IMR-90 (cell line): ENCODE measurements at regions of chr11 and their contacts with region 1.

Region 1: DNA sequence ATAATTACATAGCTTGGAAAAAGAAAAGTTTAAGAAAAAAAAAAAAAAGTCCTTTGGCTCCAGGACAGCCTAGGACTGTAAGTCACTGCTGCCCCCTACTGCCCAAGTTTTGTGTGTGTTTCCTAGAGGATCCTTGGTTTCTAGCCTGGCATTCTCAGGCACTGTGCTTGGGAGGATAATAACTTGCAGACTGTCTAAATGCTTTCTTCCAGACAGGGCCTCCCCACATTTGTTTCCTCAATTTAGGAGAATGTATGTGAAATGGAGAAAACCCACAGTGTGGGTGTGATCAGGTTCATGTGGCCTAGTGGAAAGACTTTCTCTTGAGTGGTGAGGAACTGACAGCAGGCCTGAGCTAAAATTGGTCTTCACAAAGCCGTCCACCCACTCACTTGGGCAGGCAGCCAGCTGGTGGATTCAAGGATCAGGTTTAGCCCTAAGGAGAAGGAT is 191.0 kb downstream of the NAV2 start:
- DNase-seq: peak; percentile 83
- ATAC-seq: peak; percentile 85
- H3K4me3 ChIP-seq: no peak overlapping the region
- H3K27ac ChIP-seq: no peak overlapping the region
- H3K4me1 ChIP-seq: no peaks in the 10 kb centered on the region
- H3K27me3 ChIP-seq: no peaks in the 10 kb centered on the region
- CTCF ChIP-seq: peak; percentile 84
- POLR2A ChIP-seq: no peak
- RAD21 ChIP-seq: peak; percentile 89

Region 2: GRCh38 chr11:19259487-19260345 is 643.9 kb before region 1 on chr11:
- CTCF ChIA-PET with region 1: no interaction called
- POLR2A ChIA-PET with region 1: no interaction called
- dilution Hi-C with region 1: no loop called
- in situ Hi-C with region 1: no loop called
- intact Hi-C with region 1: loop called (anchors 5 kb)
- DNase-seq: peak; percentile 54
- ATAC-seq: peak; percentile 99
- H3K4me3 ChIP-seq: no peak overlapping the region
- H3K27ac ChIP-seq: no peak overlapping the region
- H3K4me1 ChIP-seq: no peaks in the 10 kb centered on the region
- H3K27me3 ChIP-seq: peaks cover 22% of the 10 kb centered on the region
- CTCF ChIP-seq: peak; percentile 90
- POLR2A ChIP-seq: no peak
- RAD21 ChIP-seq: peak; percentile 75

Region 3: DNA sequence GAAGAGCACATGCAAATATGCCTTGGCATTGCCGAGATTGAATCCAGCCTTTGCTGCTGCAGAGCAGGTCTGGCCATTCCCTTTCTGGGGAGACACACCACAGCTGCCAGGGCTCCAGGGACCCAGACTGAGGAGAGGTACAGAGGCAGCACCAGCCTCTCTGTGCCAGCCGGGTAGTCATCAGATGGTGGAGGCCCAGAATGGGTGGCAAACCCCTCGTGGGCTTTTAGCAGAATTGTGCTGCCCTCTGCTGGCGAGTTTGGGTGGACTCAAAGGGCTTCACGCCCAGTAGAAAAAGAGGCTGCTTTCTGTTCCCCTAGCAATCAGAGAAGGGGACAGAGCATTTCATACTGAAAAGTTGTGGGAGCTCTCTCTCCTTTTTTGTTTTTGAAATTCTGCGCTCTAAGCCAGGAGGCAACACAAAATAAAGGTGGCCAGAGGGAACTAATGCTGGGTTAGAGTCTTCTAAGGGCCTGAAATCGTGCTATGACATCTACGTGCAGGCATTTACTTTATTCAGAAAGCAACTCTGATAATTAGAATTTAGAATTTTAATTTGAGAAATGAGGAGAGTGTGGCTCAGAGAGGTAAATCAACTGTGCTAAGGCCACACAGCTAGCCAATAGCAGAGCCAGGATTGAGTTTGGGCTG is 349.8 kb before region 1 on chr11:
- CTCF ChIA-PET with region 1: no interaction called
- POLR2A ChIA-PET with region 1: no interaction called
- dilution Hi-C with region 1: no loop called
- in situ Hi-C with region 1: no loop called
- intact Hi-C with region 1: loop called (anchors 1 kb)
- DNase-seq: peak; percentile 62
- ATAC-seq: peak; percentile 79
- H3K4me3 ChIP-seq: no peak overlapping the region
- H3K27ac ChIP-seq: no peak overlapping the region
- H3K4me1 ChIP-seq: no peaks in the 10 kb centered on the region
- H3K27me3 ChIP-seq: peaks cover 32% of the 10 kb centered on the region
- CTCF ChIP-seq: peak; percentile 94
- POLR2A ChIP-seq: peak; percentile 40; the same call in 1 of the 2 replicates
- RAD21 ChIP-seq: peak; percentile 97

Region 4: GRCh38 chr11:19566583-19567379 is 336.9 kb before region 1 on chr11:
- CTCF ChIA-PET with region 1: interaction called, 13 read pairs
- POLR2A ChIA-PET with region 1: no interaction called
- dilution Hi-C with region 1: no loop called
- in situ Hi-C with region 1: loop called (anchors 5 kb)
- intact Hi-C with region 1: loop called (anchors 1 kb)
- DNase-seq: no peak
- ATAC-seq: no peak
- H3K4me3 ChIP-seq: no peak overlapping the region
- H3K27ac ChIP-seq: no peak overlapping the region
- H3K4me1 ChIP-seq: no peaks in the 10 kb centered on the region; the same call in 1 of the 2 replicates
- H3K27me3 ChIP-seq: peaks cover 1% of the 10 kb centered on the region
- CTCF ChIP-seq: no peak
- POLR2A ChIP-seq: no peak
- RAD21 ChIP-seq: no peak

Region 5: DNA sequence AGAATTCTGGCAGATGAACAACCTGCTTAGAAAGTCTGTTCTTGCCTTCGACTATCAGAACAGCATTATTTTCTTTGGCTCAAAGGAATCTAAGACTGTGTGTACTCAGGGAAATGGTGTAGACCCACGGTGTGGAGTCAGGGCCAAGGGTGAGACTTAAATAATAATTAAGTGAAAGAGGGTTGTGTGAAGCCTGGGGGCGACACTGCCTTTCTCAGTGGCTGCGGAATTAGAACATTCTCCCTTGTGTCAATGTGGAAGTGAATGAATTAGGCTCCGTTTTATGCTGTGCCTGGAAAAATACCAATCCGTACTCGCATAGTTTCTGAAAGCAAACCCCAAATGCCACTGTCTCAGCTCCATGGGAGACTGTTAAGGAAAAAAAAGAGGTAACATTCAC is 140.3 kb before region 1 on chr11:
- CTCF ChIA-PET with region 1: no interaction called
- POLR2A ChIA-PET with region 1: no interaction called
- dilution Hi-C with region 1: no loop called
- in situ Hi-C with region 1: no loop called
- intact Hi-C with region 1: no loop called
- DNase-seq: no peak
- ATAC-seq: no peak
- H3K4me3 ChIP-seq: no peak overlapping the region
- H3K27ac ChIP-seq: no peak overlapping the region
- H3K4me1 ChIP-seq: no peaks in the 10 kb centered on the region
- H3K27me3 ChIP-seq: peaks cover 3% of the 10 kb centered on the region; the same call in 1 of the 2 replicates
- CTCF ChIP-seq: no peak
- POLR2A ChIP-seq: no peak
- RAD21 ChIP-seq: no peak

Region 6: GRCh38 chr11:19951558-19952115 is 48.0 kb after region 1 on chr11:
- CTCF ChIA-PET with region 1: interaction called, 3 read pairs
- POLR2A ChIA-PET with region 1: no interaction called
- dilution Hi-C with region 1: no loop called
- in situ Hi-C with region 1: no loop called
- intact Hi-C with region 1: loop called (anchors 1 kb)
- DNase-seq: peak; percentile 70
- ATAC-seq: peak; percentile 69
- H3K4me3 ChIP-seq: no peak overlapping the region; the same call in 1 of the 2 replicates
- H3K27ac ChIP-seq: no peak overlapping the region
- H3K4me1 ChIP-seq: peaks cover 15% of the 10 kb centered on the region
- H3K27me3 ChIP-seq: no peaks in the 10 kb centered on the region
- CTCF ChIP-seq: peak; percentile 73
- POLR2A ChIP-seq: no peak
- RAD21 ChIP-seq: peak; percentile 75

Region 7: GRCh38 chr11:20127671-20128527 is 224.3 kb after region 1 on chr11:
- CTCF ChIA-PET with region 1: no interaction called
- POLR2A ChIA-PET with region 1: no interaction called
- dilution Hi-C with region 1: no loop called
- in situ Hi-C with region 1: no loop called
- intact Hi-C with region 1: loop called (anchors 1 kb)
- DNase-seq: peak; percentile 69
- ATAC-seq: peak; percentile 82
- H3K4me3 ChIP-seq: no peak overlapping the region
- H3K27ac ChIP-seq: no peak overlapping the region
- H3K4me1 ChIP-seq: no peaks in the 10 kb centered on the region
- H3K27me3 ChIP-seq: no peaks in the 10 kb centered on the region; the same call in 1 of the 2 replicates
- CTCF ChIP-seq: peak; percentile 87
- POLR2A ChIP-seq: no peak
- RAD21 ChIP-seq: peak; percentile 88